K562 (cell line): ENCODE measurements at regions of chr10 and their contacts with region 1.

Region 1: DNA sequence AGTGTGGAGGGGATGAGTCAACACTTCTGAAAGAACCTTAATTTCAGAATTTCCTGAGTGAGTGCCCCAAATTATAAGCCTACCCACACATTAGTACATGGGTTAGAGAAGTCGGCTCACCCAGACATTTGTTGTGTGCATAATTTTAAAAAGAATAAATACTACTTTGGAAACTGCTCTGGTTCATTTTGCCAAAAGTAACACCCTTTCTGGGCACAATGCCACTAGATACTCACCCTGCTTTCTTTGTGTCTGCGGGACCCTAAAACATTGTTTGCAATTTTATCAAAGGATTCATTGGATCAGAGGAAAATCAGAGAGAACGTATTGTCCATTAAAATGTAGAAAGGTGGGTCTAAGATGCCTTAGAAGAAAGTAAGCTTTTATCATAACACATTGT is 245.5 kb upstream of the NRP1 start:
- DNase-seq: no peak
- ATAC-seq: no peak
- H3K4me3 ChIP-seq: no peak overlapping the region
- H3K27ac ChIP-seq: no peak overlapping the region
- H3K4me1 ChIP-seq: no peaks in the 10 kb centered on the region
- H3K27me3 ChIP-seq: peaks cover 0 to 6% of the 10 kb centered on the region in 2 experiments; a peak in 1 of 5 replicates
- CTCF ChIP-seq: no peak
- EP300 ChIP-seq: no peak
- POLR2A ChIP-seq: no peak
- RAD21 ChIP-seq: no peak

Region 2: DNA sequence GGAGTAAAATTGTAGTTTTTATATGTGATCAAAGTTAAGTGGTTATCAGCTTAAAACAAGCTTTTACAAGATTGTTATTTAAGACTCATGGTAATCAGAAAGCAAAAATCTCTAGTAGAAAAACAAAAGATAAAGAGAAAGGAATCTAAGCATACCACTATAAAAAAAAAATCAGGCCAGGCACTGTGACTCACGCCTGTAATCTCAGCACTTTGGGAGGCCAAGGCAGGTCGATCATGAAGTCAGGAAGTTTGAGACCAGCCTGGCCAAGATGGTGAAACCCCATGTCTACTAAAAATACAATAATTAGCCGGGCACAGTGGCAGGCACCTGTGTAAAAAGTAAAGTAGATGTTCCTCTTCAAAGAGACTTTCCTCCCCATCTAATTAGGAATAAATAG is 20.4 kb after region 1 on chr10:
- CTCF ChIA-PET with region 1: no interaction called
- POLR2A ChIA-PET with region 1: no interaction called
- in situ Hi-C with region 1: no loop called
- intact Hi-C with region 1: loop called (anchors 2 kb)
- DNase-seq: no peak
- ATAC-seq: no peak
- H3K4me3 ChIP-seq: no peak overlapping the region
- H3K27ac ChIP-seq: no peak overlapping the region
- H3K4me1 ChIP-seq: no peaks in the 10 kb centered on the region
- H3K27me3 ChIP-seq: no peaks in the 10 kb centered on the region
- CTCF ChIP-seq: no peak
- EP300 ChIP-seq: no peak
- POLR2A ChIP-seq: no peak
- RAD21 ChIP-seq: no peak

Region 3: DNA sequence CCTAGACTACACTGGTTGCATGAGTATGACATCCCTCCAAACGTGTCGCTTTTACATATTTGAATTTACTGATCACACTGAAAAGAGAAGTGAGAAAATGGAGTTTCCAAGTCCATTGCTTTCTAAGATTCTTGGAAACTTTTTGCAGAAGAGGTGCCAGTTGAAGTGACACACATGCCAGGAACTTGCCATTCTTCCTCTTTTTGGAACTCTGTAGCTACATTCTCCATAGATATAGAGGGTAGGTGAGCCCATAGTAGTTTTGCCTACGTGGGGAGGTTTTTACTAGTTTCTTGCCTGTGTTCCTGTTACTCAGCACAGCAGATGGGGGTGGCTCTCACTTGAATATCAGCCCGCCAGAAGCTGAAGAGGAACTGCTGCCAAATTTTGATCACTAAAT is 41.1 kb after region 1 on chr10:
- CTCF ChIA-PET with region 1: no interaction called
- POLR2A ChIA-PET with region 1: no interaction called
- in situ Hi-C with region 1: no loop called
- intact Hi-C with region 1: no loop called
- DNase-seq: no peak
- ATAC-seq: no peak
- H3K4me3 ChIP-seq: no peak overlapping the region
- H3K27ac ChIP-seq: no peak overlapping the region
- H3K4me1 ChIP-seq: no peaks in the 10 kb centered on the region; a peak in 1 of 5 replicates
- H3K27me3 ChIP-seq: no peaks in the 10 kb centered on the region
- CTCF ChIP-seq: no peak
- EP300 ChIP-seq: no peak
- POLR2A ChIP-seq: no peak
- RAD21 ChIP-seq: no peak